Activated T-helper 2 cell treated with anti-CD3 and anti-CD28 coated beads, Interferon-gamma antibody, Interleukin-2, Interleukin-4, amounts not matched to agents 10 μg/mL and 5 μg/mL and 100 μg/mL, durations not matched to agents 14 hours and 24 hours and 36 hours (primary cell): ENCODE measurements at regions of chr9 and their contacts with region 1.

Region 1: DNA sequence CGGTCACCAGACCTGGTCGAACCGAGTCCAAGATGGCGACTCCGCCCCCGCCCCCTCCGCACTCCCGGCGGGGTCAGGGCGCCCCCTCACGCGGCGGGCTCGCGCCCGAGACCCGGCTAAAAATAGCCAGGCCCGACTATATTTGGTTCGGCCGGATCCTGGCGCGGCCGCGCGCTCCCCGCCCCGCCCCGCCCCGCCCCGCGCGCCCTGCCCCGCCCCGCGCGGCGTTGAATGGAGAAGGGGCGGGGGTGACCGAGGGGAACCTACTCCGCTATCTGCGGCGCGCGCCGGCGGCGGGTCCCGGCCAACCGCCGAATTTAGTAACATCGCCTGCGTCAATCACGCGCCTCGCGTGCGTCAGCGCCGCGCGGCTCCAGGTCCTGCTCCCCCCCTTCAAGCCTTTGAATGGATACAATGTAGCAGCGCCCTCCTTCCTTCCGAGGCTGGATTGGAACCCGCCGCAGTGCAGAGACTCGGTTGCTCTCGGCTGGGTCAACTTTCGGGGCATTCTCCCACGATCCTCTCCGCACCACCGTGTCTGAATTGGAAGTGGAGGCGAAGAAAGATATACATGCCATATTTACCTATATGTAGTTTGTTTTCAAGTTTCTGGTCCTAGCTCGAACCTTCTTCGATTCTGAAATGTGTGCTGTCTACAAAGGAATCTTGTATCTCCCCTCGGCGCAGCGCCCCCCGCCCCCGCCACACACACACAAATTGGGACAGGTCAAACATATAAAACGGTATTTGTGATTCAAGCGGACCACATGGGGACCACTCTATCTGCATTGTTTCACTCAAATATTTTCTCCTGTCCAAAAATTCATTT is 1.6 kb upstream of the NR4A3 start:
- DNase-seq: peak; percentile 87
- H3K4me3 Mint-ChIP-seq: peak overlapping the region; percentile 100
- H3K27ac Mint-ChIP-seq: peak overlapping the region; percentile 98
- H3K4me1 Mint-ChIP-seq: peaks cover 44% of the 10 kb centered on the region
- H3K27me3 Mint-ChIP-seq: peaks cover 3% of the 10 kb centered on the region

Region 2: DNA sequence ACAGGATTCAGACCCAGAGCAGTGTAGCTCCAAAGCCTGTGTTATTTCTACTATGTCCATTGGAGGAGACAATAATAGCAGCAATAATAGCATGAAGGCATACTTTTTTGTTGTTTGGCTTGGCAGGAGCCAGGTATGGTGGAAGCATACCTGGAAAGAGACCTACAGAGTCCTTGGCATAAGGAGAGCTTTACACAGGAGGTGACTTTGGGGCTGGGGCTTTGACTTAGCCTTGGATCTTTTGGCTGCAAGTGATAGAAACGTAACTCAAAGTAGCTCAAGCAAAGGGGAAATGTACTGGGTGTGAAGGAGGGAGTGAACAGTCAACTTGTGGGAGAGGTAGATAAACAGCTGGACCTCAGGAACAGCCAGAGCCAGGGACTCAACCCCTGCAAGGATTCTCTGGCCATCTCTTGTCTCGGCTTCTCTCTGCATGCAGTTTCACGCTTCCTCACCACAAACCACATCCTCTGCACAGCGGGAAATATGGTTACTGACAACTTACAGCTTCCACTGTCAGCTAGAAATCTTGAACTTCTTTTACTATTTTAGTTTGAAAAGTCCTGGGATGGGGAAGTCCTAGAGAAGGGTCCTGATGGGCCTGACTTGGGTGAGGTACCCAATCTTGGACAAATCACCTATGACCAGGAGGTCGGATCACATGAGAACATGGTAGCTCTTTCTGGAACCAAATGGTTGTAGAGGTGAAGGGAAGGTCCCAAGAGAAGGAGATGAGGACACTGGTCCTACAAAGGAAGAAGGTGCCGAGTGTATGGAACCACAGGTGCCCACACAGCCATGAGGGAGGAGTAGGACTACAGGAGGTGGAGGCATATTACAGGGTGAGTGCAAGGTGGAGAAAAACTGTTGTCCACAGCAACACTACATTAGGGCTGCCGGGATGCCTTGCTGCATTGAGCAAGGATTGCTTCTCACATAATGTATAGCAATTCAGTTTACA is 762.1 kb before region 1 on chr9:
- intact Hi-C with region 1: loop called (anchors 5 kb)
- DNase-seq: peak; percentile 76
- H3K4me3 Mint-ChIP-seq: peak overlapping the region; percentile 73
- H3K27ac Mint-ChIP-seq: peak overlapping the region; percentile 81
- H3K4me1 Mint-ChIP-seq: peaks cover 59% of the 10 kb centered on the region
- H3K27me3 Mint-ChIP-seq: peaks cover 3% of the 10 kb centered on the region

Region 3: GRCh38 chr9:99253772-99254431 is 566.2 kb before region 1 on chr9:
- intact Hi-C with region 1: loop called (anchors 1 kb)
- DNase-seq: peak; percentile 71
- H3K4me3 Mint-ChIP-seq: peak overlapping the region; percentile 59
- H3K27ac Mint-ChIP-seq: peak overlapping the region; percentile 97
- H3K4me1 Mint-ChIP-seq: peaks cover 70% of the 10 kb centered on the region
- H3K27me3 Mint-ChIP-seq: no peaks in the 10 kb centered on the region

Region 4: GRCh38 chr9:99720455-99721050 is 99.5 kb before region 1 on chr9:
- intact Hi-C with region 1: loop called (anchors 5 kb)
- DNase-seq: no peak
- H3K4me3 Mint-ChIP-seq: peak overlapping the region; percentile 69
- H3K27ac Mint-ChIP-seq: peak overlapping the region; percentile 84
- H3K4me1 Mint-ChIP-seq: peaks cover 30% of the 10 kb centered on the region
- H3K27me3 Mint-ChIP-seq: no peaks in the 10 kb centered on the region

Region 5: DNA sequence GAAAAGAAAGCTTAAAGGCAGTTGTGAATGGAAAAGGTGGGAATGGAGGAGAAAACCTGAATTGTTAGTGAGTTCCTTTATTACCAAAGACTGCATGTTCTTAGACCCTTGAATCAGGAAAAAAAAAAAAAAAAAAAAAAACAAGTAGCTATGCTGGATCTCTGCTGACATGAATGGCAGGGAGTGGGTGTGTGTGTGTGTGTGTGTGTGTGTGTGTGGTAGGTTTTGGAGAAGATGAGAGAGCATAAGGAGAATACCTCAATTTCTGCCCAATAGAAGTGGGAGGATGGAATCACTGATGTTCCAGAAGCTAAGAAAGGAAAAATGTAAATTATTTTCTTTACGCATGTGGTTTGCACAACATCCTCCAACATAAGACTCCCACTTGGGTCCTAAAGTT is 23.8 kb before region 1 on chr9:
- intact Hi-C with region 1: no loop called
- DNase-seq: no peak
- H3K4me3 Mint-ChIP-seq: no peak overlapping the region
- H3K27ac Mint-ChIP-seq: no peak overlapping the region
- H3K4me1 Mint-ChIP-seq: peaks cover 10% of the 10 kb centered on the region
- H3K27me3 Mint-ChIP-seq: peaks cover 32% of the 10 kb centered on the region

Region 6: DNA sequence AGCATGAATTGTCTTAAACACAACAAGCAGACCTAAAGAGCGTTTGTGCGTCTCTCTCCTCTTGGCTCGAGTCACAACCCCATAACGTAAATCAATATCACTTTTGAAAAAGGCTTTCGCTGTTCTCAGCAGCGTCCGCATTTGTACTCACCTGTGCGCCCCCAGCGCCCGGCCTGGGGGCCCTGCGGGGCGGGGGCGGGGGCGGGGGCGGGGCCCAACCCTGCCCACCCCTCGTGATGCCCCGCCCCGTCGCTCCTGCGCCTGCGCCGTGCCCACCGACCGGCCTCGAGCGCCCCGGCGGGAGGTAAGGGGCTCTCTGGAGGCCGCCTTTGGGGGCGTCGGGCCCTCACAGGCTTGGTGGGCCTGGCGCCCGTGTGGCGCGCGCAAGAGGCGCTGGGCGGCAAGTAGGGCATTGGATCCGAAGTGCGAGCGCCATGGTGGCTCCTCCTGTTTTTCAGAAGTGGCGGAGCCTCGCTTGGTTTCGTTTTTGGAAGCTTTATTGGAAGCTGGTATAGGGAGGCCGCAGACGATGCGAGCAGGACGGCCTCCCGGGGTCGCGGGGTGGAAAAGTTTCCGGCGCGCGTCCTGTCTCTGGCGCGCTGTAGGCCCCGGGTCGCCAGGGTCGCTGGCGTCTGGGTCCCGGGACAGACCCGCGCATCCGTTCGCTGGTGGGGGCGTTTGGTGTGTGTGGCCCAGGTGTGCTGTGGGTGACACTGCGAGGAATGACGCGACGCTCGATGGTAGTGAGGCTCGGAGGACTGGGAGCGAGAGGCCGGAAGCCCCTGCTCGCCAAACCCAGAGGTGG is 86.5 kb after region 1 on chr9 and contains the start of gene STX17:
- intact Hi-C with region 1: loop called (anchors 2 kb)
- DNase-seq: peak; percentile 76
- H3K4me3 Mint-ChIP-seq: peak within 1 kb of the TSS; percentile 94
- H3K27ac Mint-ChIP-seq: peak within 1 kb of the TSS; percentile 90
- H3K4me1 Mint-ChIP-seq: peaks cover 28% of the 10 kb centered on the region
- H3K27me3 Mint-ChIP-seq: peaks cover 17% of the 10 kb centered on the region
- total RNA-seq, gene STX17: 27.6 and 27.9 TPM in 2 replicates

Region 7: GRCh38 chr9:100098887-100099721 is 279.0 kb after region 1 on chr9 and contains the starts of genes ERP44 and INVS:
- intact Hi-C with region 1: loop called (anchors 5 kb)
- DNase-seq: peak; percentile 97
- H3K4me3 Mint-ChIP-seq: peak within 1 kb of the TSS; percentile 96
- H3K27ac Mint-ChIP-seq: peak within 1 kb of the TSS; percentile 91
- H3K4me1 Mint-ChIP-seq: peaks cover 27% of the 10 kb centered on the region
- H3K27me3 Mint-ChIP-seq: no peaks in the 10 kb centered on the region
- total RNA-seq, gene ERP44: 21.5 and 22.0 TPM in 2 replicates
- total RNA-seq, gene INVS: 18.8 and 20.5 TPM in 2 replicates

Region 8: GRCh38 chr9:100160021-100160420 is 340.0 kb after region 1 on chr9:
- intact Hi-C with region 1: no loop called
- DNase-seq: no peak
- H3K4me3 Mint-ChIP-seq: no peak overlapping the region
- H3K27ac Mint-ChIP-seq: no peak overlapping the region
- H3K4me1 Mint-ChIP-seq: no peaks in the 10 kb centered on the region
- H3K27me3 Mint-ChIP-seq: no peaks in the 10 kb centered on the region